B cell (primary cell): ENCODE measurements at regions of chr19 and their contacts with region 1.

Region 1: GRCh38 chr19:45478454-45479238 is 10.8 kb downstream of the FOSB start:
- DNase-seq: peak; percentile 95
- ATAC-seq: peak; percentile 83
- H3K4me3 ChIP-seq: peak overlapping the region; percentile 67 to 98 (median 79)
- H3K4me3 Mint-ChIP-seq: peak overlapping the region; percentile 74
- H3K27ac ChIP-seq: peak overlapping the region; percentile 99 to 100
- H3K27ac Mint-ChIP-seq: peak overlapping the region; percentile 98
- H3K4me1 ChIP-seq: peaks cover 7 to 16% of the 10 kb centered on the region in 2 donors
- H3K4me1 Mint-ChIP-seq: peaks cover 26% of the 10 kb centered on the region
- H3K27me3 ChIP-seq: peaks cover 0 to 6% (median 3%) of the 10 kb centered on the region in 4 experiments
- H3K27me3 Mint-ChIP-seq: peaks cover 10% of the 10 kb centered on the region
- CTCF ChIP-seq: peak; percentile 82

Region 2: DNA sequence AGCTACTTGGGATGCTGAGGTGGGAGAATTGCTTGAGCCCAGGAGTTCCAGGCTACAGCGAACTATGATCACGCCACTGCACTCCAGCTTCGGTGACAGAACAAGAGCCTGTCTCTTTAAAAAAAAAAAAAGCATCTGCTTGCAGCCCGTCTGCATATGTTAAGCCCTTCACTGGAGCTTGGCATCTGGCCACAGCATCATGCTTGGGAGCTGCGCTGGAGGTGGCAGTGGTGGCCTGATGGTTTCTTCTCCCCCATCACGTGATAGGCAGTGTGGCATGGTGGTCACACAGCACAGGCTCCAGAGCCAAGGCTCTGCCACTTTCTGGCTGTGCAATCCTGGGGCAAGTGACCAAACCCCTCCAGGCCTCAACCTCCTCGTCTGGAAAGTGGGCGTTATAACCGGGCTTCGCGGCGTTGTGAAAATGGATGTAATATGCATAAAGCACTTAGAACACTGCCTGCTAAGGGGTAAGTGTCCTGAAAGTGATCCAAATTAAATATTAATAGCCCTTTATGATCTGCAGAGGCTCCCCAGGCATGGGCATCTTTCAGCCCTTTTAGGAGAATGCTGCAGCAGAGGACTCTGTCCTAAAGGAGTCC is 203.2 kb before region 1 on chr19:
- CTCF ChIA-PET with region 1: no interaction called
- POLR2A ChIA-PET with region 1: no interaction called
- intact Hi-C with region 1: no loop called
- DNase-seq: no peak
- ATAC-seq: no peak
- H3K4me3 ChIP-seq: no peak overlapping the region
- H3K4me3 Mint-ChIP-seq: no peak overlapping the region
- H3K27ac ChIP-seq: no peak overlapping the region
- H3K27ac Mint-ChIP-seq: no peak overlapping the region
- H3K4me1 ChIP-seq: no peaks in the 10 kb centered on the region
- H3K4me1 Mint-ChIP-seq: no peaks in the 10 kb centered on the region
- H3K27me3 ChIP-seq: no peaks in the 10 kb centered on the region
- H3K27me3 Mint-ChIP-seq: no peaks in the 10 kb centered on the region
- CTCF ChIP-seq: no peak

Region 3: GRCh38 chr19:45391340-45391739 is 87.3 kb before region 1 on chr19:
- CTCF ChIA-PET with region 1: no interaction called
- POLR2A ChIA-PET with region 1: no interaction called
- intact Hi-C with region 1: no loop called
- DNase-seq: no peak
- ATAC-seq: no peak
- H3K4me3 ChIP-seq: no peak overlapping the region
- H3K4me3 Mint-ChIP-seq: no peak overlapping the region
- H3K27ac ChIP-seq: no peak overlapping the region
- H3K27ac Mint-ChIP-seq: no peak overlapping the region
- H3K4me1 ChIP-seq: no peaks in the 10 kb centered on the region
- H3K4me1 Mint-ChIP-seq: peaks cover 2% of the 10 kb centered on the region
- H3K27me3 ChIP-seq: peaks cover 0 to 6% (median 0%) of the 10 kb centered on the region in 4 experiments
- H3K27me3 Mint-ChIP-seq: peaks cover 11% of the 10 kb centered on the region
- CTCF ChIP-seq: no peak

Region 4: GRCh38 chr19:45423589-45424190 is 55.0 kb before region 1 on chr19 and contains the start of gene ERCC1:
- CTCF ChIA-PET with region 1: interaction called, 17 read pairs
- POLR2A ChIA-PET with region 1: interaction called, 6 read pairs
- intact Hi-C with region 1: loop called (anchors 2 kb)
- DNase-seq: peak; percentile 87
- ATAC-seq: peak; percentile 79
- H3K4me3 ChIP-seq: peak within 1 kb of the TSS; percentile 26 to 77 (median 69)
- H3K4me3 Mint-ChIP-seq: peak within 1 kb of the TSS; percentile 97
- H3K27ac ChIP-seq: peak within 1 kb of the TSS; percentile 64 to 73
- H3K27ac Mint-ChIP-seq: peak within 1 kb of the TSS; percentile 94
- H3K4me1 ChIP-seq: peaks cover 36 to 62% of the 10 kb centered on the region in 2 donors
- H3K4me1 Mint-ChIP-seq: peaks cover 58% of the 10 kb centered on the region
- H3K27me3 ChIP-seq: peaks cover 0 to 11% (median 4%) of the 10 kb centered on the region in 4 experiments
- H3K27me3 Mint-ChIP-seq: peaks cover 11% of the 10 kb centered on the region
- CTCF ChIP-seq: no peak
- total RNA-seq, gene ERCC1: 75.7 and 80.2 TPM in 2 replicates

Region 5: DNA sequence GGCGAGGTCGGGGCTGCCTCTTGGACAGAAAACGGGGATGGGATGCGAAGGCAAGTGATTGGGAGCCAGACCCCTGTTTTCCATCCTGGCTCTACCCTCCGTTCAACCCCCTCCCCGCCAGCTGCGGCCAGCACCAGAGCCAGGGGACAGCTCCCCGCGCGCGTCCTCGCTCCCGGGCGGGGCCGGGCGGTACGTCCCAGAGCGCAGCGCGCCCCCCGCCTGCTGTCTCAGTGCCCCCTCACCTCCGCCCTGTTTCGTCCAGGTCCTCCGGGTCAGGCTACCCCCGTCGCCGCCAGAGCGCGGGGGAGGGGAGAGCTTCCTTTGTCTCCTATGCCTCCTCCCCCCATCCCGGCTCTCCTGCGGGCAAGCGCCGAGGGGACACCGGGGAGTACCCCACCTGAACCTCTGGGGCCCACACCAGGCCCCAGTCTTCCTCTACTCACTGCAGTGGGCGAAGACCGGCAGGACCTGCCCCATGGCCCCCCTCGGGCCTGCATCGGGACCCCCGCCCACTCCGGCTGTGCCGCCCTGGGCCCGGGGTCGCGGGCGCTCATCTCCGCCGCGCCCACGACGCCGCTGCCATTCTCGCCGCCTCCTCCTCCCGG is 17.8 kb after region 1 on chr19:
- CTCF ChIA-PET with region 1: interaction called, 38 read pairs
- POLR2A ChIA-PET with region 1: no interaction called
- intact Hi-C with region 1: no loop called
- DNase-seq: peak; percentile 66
- ATAC-seq: peak; percentile 6
- H3K4me3 ChIP-seq: peak overlapping the region in 4 of 5 experiments; percentile 52 to 64 (median 60)
- H3K4me3 Mint-ChIP-seq: peak overlapping the region; percentile 73
- H3K27ac ChIP-seq: no peak overlapping the region
- H3K27ac Mint-ChIP-seq: no peak overlapping the region
- H3K4me1 ChIP-seq: peaks cover 43 to 51% of the 10 kb centered on the region in 2 donors
- H3K4me1 Mint-ChIP-seq: peaks cover 45% of the 10 kb centered on the region
- H3K27me3 ChIP-seq: peaks cover 0 to 49% (median 24%) of the 10 kb centered on the region in 4 experiments
- H3K27me3 Mint-ChIP-seq: peaks cover 21% of the 10 kb centered on the region
- CTCF ChIP-seq: no peak

Region 6: GRCh38 chr19:45506246-45506990 is 27.8 kb after region 1 on chr19:
- CTCF ChIA-PET with region 1: interaction called, 10 read pairs
- POLR2A ChIA-PET with region 1: interaction called, 5 read pairs
- intact Hi-C with region 1: no loop called
- DNase-seq: peak; percentile 98
- ATAC-seq: peak; percentile 74
- H3K4me3 ChIP-seq: peak overlapping the region; percentile 63 to 96 (median 84)
- H3K4me3 Mint-ChIP-seq: peak overlapping the region; percentile 94
- H3K27ac ChIP-seq: peak overlapping the region; percentile 83 to 87
- H3K27ac Mint-ChIP-seq: peak overlapping the region; percentile 94
- H3K4me1 ChIP-seq: peaks cover 26 to 43% of the 10 kb centered on the region in 2 donors
- H3K4me1 Mint-ChIP-seq: peaks cover 54% of the 10 kb centered on the region
- H3K27me3 ChIP-seq: no peaks in the 10 kb centered on the region
- H3K27me3 Mint-ChIP-seq: no peaks in the 10 kb centered on the region
- CTCF ChIP-seq: peak; percentile 63